Endothelial cell of umbilical vein (primary cell): ENCODE measurements at regions of chr17 and their contacts with region 1.

Region 1: DNA sequence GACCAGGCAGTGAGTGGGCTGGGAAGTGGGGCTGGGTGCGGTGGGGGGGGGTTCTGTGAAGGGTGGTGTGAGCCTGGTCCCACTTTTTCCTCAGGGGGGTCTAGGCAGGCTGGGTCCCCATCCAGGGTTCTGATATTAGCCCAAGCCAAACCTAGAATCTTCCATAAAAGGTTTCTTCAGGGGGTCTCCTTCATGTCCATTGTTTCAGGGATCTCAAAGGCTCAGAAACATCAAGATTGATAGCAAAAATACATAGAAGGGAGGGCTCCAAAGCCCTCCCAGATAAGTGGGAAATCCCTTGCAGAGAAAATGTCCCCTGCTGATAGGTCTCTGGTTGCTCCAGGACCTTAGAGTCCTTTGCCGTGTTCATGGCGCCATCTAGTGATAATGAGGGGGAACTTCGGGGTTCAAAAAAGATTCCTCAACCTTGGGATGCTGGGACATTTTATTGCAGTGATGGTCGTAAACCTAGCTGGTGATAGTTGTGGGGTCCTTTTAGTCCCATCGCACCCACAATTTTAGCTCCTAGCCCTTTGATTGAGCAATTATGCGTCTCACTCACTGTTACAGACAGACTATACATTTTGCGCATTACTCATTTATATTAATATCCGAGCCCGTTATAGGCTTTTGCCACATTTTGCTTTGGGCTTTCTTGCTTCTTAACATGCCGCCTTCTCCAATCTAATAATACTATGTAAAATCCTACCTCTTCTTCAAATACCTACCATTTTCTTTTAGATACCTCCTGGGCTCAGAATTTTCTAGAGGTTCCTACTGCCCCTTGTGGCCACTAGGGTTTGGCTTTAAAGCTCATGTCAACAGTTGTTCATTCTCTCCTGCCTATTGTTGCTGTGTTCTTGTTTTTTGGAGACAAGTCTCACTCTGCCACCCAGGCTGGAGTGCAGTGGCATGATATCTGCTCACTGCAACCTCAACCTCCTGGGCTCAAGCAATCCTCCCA is 35.1 kb downstream of the IGF2BP1 start:
- DNase-seq: peak; percentile 80
- H3K4me3 ChIP-seq: no peak overlapping the region
- H3K27ac ChIP-seq: no peak overlapping the region
- H3K4me1 ChIP-seq: peaks cover 35% of the 10 kb centered on the region
- H3K27me3 ChIP-seq: no peaks in the 10 kb centered on the region
- CTCF ChIP-seq: peak; percentile 51 to 67
- POLR2A ChIP-seq: peak; percentile 53

Region 2: DNA sequence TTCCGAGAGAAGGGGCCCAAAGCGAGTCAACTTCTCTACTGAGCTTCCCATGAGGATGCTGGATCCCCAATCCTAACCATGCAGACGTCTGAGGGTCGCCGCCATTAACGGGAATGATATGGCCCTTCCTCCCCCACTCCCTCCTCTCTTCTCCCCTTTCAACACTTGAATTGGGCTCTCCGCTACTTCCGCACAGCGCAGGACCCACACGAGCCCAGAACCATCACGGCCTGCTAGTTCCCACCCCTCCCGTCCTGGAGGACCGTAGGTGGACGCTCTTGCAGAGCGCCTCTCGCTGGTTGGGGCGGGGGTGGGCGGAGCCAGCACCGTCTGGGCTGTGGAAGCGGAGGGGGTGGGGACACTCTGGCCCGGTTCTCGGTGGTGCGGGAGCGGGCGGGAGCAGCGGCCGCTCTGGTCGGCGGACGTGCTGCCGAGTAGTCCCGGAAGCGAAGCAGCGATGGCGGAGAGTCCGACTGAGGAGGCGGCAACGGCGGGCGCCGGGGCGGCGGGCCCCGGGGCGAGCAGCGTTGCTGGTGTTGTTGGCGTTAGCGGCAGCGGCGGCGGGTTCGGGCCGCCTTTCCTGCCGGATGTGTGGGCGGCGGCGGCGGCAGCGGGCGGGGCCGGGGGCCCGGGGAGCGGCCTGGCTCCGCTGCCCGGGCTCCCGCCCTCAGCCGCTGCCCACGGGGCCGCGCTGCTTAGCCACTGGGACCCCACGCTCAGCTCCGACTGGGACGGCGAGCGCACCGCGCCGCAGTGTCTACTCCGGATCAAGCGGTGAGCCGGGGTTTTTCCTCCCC is 124.0 kb before region 1 on chr17 and contains the start of gene UBE2Z:
- CTCF ChIA-PET with region 1: interaction called, 16 read pairs
- POLR2A ChIA-PET with region 1: no interaction called
- dilution Hi-C with region 1: no loop called
- intact Hi-C with region 1: loop called (anchors 1 kb)
- DNase-seq: peak; percentile 96
- H3K4me3 ChIP-seq: peak within 1 kb of the TSS; percentile 50 to 84 (median 68)
- H3K27ac ChIP-seq: peak within 1 kb of the TSS; percentile 89
- H3K4me1 ChIP-seq: peaks cover 27% of the 10 kb centered on the region
- H3K27me3 ChIP-seq: no peaks in the 10 kb centered on the region
- CTCF ChIP-seq: peak in 1 of 2 donors; percentile 8
- POLR2A ChIP-seq: peak; percentile 82
- total RNA-seq, gene UBE2Z: 95.1 and 104 TPM in 2 replicates

Region 3: GRCh38 chr17:48944519-48945260 is 87.6 kb before region 1 on chr17 and contains the start of gene SNF8:
- CTCF ChIA-PET with region 1: interaction called, 32 read pairs
- POLR2A ChIA-PET with region 1: interaction called, 6 read pairs
- dilution Hi-C with region 1: no loop called
- intact Hi-C with region 1: loop called (anchors 2 kb)
- DNase-seq: peak; percentile 90
- H3K4me3 ChIP-seq: peak within 1 kb of the TSS; percentile 67 to 94 (median 73)
- H3K27ac ChIP-seq: peak within 1 kb of the TSS; percentile 70
- H3K4me1 ChIP-seq: peaks cover 15% of the 10 kb centered on the region
- H3K27me3 ChIP-seq: no peaks in the 10 kb centered on the region
- CTCF ChIP-seq: no peak
- POLR2A ChIP-seq: peak; percentile 90
- total RNA-seq, gene SNF8: 166 and 173 TPM in 2 replicates

Region 4: GRCh38 chr17:48970224-48970623 is 62.0 kb before region 1 on chr17:
- CTCF ChIA-PET with region 1: interaction called, 12 read pairs
- POLR2A ChIA-PET with region 1: interaction called, 4 read pairs
- dilution Hi-C with region 1: no loop called
- intact Hi-C with region 1: no loop called
- DNase-seq: peak; percentile 29
- H3K4me3 ChIP-seq: no peak overlapping the region
- H3K27ac ChIP-seq: no peak overlapping the region
- H3K4me1 ChIP-seq: peaks cover 15% of the 10 kb centered on the region
- H3K27me3 ChIP-seq: no peaks in the 10 kb centered on the region
- CTCF ChIP-seq: no peak
- POLR2A ChIP-seq: no peak

Region 5: DNA sequence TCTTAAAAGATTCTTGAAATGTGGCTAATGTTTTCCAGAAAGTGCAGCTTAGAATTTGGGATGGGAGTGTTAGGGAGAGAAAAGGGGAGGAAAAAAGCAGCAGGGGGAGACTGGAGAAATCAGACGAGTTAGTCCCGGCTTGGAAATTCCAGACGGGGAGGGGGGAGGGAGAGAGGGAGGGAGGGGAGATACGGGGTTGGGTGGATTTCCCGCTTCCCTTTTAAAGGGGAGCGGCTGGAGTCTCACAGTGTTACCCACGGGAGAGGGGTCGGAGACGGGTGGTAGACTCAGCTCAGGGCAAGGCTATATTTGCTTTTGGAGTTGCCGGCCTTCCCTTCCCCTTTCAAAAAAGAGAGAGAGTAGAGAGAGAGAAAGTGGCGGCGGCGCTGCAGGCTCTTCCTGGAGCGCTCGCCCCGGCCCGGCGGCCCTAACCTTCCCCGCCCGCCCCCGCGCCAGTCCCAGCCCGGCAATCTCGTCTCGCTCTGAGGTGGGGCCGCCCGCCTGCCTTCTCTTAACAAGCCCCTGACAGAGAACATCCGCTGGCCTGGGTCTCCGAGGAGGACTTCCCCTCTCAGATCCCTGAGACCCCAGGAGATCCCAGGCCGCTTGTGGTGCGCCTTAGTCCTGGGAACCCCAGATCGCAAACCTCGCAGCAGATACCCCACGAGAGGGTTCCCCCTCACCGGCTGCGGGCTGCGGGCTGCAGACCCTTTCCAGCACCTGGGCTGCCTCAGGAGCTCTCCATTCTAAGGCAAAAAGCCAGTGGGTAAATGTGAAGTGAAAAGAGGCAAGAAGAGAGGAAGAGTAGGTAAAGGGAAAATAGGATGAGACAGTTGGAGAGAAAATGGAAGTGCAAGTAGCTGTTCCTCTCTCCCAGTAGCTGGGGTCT is 28.4 kb before region 1 on chr17:
- CTCF ChIA-PET with region 1: interaction called, 133 read pairs
- POLR2A ChIA-PET with region 1: interaction called, 6 read pairs
- dilution Hi-C with region 1: no loop called
- intact Hi-C with region 1: loop called (anchors 1 kb)
- DNase-seq: peak; percentile 68
- H3K4me3 ChIP-seq: peak overlapping the region; percentile 46 to 76 (median 58)
- H3K27ac ChIP-seq: peak overlapping the region; percentile 13
- H3K4me1 ChIP-seq: peaks cover 44% of the 10 kb centered on the region
- H3K27me3 ChIP-seq: no peaks in the 10 kb centered on the region
- CTCF ChIP-seq: no peak
- POLR2A ChIP-seq: no peak

Region 6: GRCh38 chr17:49230636-49231562 is 198.7 kb after region 1 on chr17 and contains the start of gene PHOSPHO1:
- CTCF ChIA-PET with region 1: interaction called, 3 read pairs
- POLR2A ChIA-PET with region 1: no interaction called
- dilution Hi-C with region 1: no loop called
- intact Hi-C with region 1: loop called (anchors 5 kb)
- DNase-seq: peak; percentile 85
- H3K4me3 ChIP-seq: peak within 1 kb of the TSS; percentile 42 to 60 (median 49)
- H3K27ac ChIP-seq: no peak within 1 kb of the TSS
- H3K4me1 ChIP-seq: peaks cover 10% of the 10 kb centered on the region
- H3K27me3 ChIP-seq: peaks cover 0 to 4% of the 10 kb centered on the region in 2 experiments
- CTCF ChIP-seq: no peak
- POLR2A ChIP-seq: no peak
- total RNA-seq, gene PHOSPHO1: 0.18 TPM in 1 of 2 replicates, not detected in the other